ENCODE measurements at regions of chr2 and their contacts with region 1.

Region 1: GRCh38 chr2:172434821-172435605 is 7.6 kb downstream of the ITGA6 start:
- DNase-seq: peak in 7 of 9 donors; percentile 77 to 88 (median 82)
- ATAC-seq: peak; percentile 92
- H3K4me3 ChIP-seq: peak overlapping the region; percentile 25
- H3K4me3 Mint-ChIP-seq: peak overlapping the region in 6 of 10 donors; percentile 7 to 100 (median 72)
- H3K27ac ChIP-seq: peak overlapping the region; percentile 42
- H3K27ac Mint-ChIP-seq: peak overlapping the region in 5 of 9 donors; percentile 66 to 95 (median 92)
- H3K4me1 ChIP-seq: peaks cover 61 to 87% of the 10 kb centered on the region in 2 donors
- H3K4me1 Mint-ChIP-seq: peaks cover 16 to 53% (median 16%) of the 10 kb centered on the region in 7 donors
- H3K27me3 ChIP-seq: no peaks in the 10 kb centered on the region
- H3K27me3 Mint-ChIP-seq: peaks cover 0 to 31% (median 0%) of the 10 kb centered on the region in 5 donors

Region 2: DNA sequence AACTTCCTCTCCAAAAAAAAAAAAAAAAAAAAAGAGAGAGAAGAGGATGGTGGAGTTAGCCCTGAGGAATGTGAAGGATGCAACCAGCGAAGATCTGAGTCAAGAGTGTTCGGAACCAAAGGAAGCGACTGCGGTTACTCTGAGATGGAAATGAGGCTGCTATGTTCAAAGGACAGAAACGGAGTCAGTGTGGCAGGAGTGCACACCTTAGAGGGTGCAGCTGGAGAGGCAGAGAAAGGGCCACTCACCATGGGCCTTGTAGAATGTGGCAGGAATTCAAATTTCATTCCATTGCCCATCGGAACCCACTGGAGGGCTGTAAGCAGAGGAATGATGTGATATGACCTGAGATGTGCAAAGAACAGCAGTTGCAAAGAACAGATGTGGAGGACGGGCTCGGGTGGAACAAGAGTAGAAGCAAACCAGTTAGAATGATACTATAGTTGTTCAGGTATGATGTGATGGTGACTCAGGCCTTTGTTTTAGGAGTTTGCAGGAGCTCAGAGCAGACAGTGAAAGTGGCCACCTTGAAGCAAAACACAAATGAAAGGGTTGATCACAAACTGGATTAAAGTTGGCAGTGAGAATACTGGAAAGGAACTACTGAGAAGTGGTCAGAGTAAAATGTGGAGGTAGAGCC is 15.0 kb after region 1 on chr2:
- CTCF ChIA-PET with region 1: interaction called, 673 read pairs
- POLR2A ChIA-PET with region 1: interaction called, 862 read pairs
- intact Hi-C with region 1: loop called in 1 of 2 experiments (anchors 2 kb)
- DNase-seq: peak in 1 of 9 donors; percentile 32
- ATAC-seq: peak; percentile 77
- H3K4me3 ChIP-seq: no peak overlapping the region
- H3K4me3 Mint-ChIP-seq: peak overlapping the region in 9 of 10 donors; percentile 57 to 82 (median 69)
- H3K27ac ChIP-seq: peak overlapping the region; percentile 10
- H3K27ac Mint-ChIP-seq: peak overlapping the region in 8 of 9 donors; percentile 5 to 90 (median 77)
- H3K4me1 ChIP-seq: peaks cover 6 to 75% of the 10 kb centered on the region in 2 donors
- H3K4me1 Mint-ChIP-seq: peaks cover 27 to 90% (median 83%) of the 10 kb centered on the region in 7 donors
- H3K27me3 ChIP-seq: no peaks in the 10 kb centered on the region
- H3K27me3 Mint-ChIP-seq: peaks cover 0 to 20% (median 0%) of the 10 kb centered on the region in 5 donors

Region 3: GRCh38 chr2:172496160-172496608 is 61.2 kb after region 1 on chr2:
- CTCF ChIA-PET with region 1: interaction called, 4 read pairs
- POLR2A ChIA-PET with region 1: interaction called, 11 read pairs
- intact Hi-C with region 1: no loop called
- DNase-seq: peak in 7 of 9 donors; percentile 72 to 88 (median 83)
- ATAC-seq: peak; percentile 94
- H3K4me3 ChIP-seq: peak overlapping the region; percentile 22
- H3K4me3 Mint-ChIP-seq: peak overlapping the region; percentile 54 to 86 (median 77)
- H3K27ac ChIP-seq: peak overlapping the region; percentile 68
- H3K27ac Mint-ChIP-seq: peak overlapping the region; percentile 86 to 99 (median 97)
- H3K4me1 ChIP-seq: peaks cover 22 to 83% of the 10 kb centered on the region in 2 donors
- H3K4me1 Mint-ChIP-seq: peaks cover 32 to 94% (median 85%) of the 10 kb centered on the region in 7 donors
- H3K27me3 ChIP-seq: no peaks in the 10 kb centered on the region
- H3K27me3 Mint-ChIP-seq: no peaks in the 10 kb centered on the region

Region 4: DNA sequence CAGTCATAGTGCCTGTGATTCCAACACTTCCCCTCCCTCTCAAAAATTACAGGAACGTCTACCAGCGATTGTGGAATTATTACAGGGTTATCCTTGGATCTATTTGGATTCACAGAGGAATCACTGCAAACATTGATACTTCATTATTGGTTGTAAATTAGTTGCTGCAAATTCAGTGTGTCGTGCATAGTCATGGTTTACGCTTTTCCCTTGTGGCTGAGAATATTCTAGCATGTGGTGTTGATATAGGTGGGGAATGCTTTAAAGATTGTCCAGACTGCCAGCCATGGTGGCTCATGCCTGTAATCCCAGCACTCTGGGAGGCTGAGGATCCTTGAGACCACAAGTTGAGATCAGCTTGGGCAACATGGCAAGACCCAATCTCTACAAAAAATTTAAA is 72.2 kb after region 1 on chr2:
- CTCF ChIA-PET with region 1: no interaction called
- POLR2A ChIA-PET with region 1: no interaction called
- intact Hi-C with region 1: no loop called
- DNase-seq: no peak
- ATAC-seq: no peak
- H3K4me3 ChIP-seq: no peak overlapping the region
- H3K4me3 Mint-ChIP-seq: no peak overlapping the region
- H3K27ac ChIP-seq: no peak overlapping the region
- H3K27ac Mint-ChIP-seq: peak overlapping the region in 7 of 9 donors; percentile 56 to 92 (median 76)
- H3K4me1 ChIP-seq: peaks cover 0 to 20% of the 10 kb centered on the region in 2 donors
- H3K4me1 Mint-ChIP-seq: peaks cover 11 to 86% (median 81%) of the 10 kb centered on the region in 7 donors
- H3K27me3 ChIP-seq: no peaks in the 10 kb centered on the region
- H3K27me3 Mint-ChIP-seq: no peaks in the 10 kb centered on the region

Region 5: DNA sequence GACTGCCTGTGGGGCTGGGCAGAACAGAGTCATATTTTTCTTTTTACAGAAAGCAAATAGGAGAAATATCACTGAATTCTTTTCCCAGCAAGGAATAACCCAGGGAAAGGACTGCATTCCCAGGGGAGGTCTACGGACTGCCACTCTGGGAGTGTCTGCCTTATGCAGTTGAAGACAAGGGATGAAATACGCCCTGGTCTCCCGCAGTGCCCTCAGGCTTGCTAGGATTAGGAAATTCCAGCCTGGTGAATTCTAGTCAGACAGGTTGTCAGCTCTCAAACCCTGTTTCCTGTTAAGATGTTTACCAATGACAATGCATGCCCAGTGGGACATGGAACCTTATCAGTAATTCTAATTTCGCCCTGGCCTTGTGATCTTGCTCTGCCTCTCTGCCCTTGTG is 90.6 kb after region 1 on chr2:
- CTCF ChIA-PET with region 1: no interaction called
- POLR2A ChIA-PET with region 1: no interaction called
- intact Hi-C with region 1: no loop called
- DNase-seq: no peak
- ATAC-seq: no peak
- H3K4me3 ChIP-seq: no peak overlapping the region
- H3K4me3 Mint-ChIP-seq: no peak overlapping the region
- H3K27ac ChIP-seq: no peak overlapping the region
- H3K27ac Mint-ChIP-seq: peak overlapping the region in 1 of 9 donors; percentile 38
- H3K4me1 ChIP-seq: no peaks in the 10 kb centered on the region
- H3K4me1 Mint-ChIP-seq: peaks cover 0 to 2% (median 0%) of the 10 kb centered on the region in 7 donors
- H3K27me3 ChIP-seq: no peaks in the 10 kb centered on the region
- H3K27me3 Mint-ChIP-seq: no peaks in the 10 kb centered on the region

Measured in naive thymus-derived CD4-positive, alpha-beta T cell (primary cell).